ENCODE measurements at regions of chr2 and their contacts with region 1.

Region 1: DNA sequence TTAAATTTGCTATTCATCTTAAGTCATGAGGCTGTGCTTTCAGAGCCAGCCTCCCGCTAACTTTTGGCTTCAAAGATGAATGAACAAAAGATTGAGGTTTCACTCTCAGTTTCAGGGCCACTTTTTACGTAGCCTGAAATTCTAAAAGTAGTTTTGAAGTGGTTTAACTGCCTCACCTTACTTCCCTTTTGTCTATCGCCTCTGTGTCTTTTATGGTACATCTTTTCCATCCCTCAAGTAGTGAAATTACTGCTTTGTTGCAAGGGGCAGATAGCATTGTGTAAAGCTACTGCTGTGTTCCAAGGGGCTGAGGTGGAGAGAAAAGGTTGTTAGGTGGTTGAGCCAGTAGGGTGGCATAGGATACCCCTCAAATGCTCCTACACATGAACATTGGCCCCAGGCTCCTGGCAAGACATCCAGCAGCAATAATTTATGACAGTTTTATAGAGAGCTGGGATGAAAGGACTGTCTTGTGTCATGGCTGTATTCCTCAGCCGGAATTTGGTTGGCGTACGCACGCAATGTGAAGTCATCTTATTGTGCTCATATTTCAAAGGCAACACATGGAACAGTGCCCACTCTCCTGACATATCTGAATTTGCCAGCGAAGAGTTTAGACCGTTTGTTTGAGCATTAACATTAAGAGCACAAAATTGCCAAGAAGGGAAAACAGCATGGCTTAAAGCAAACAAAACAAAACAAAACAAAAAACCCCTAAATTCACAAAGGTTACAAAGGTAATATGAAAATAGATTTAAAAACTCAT is 32.2 kb downstream of the QPCT start:
- DNase-seq: peak; percentile 67
- H3K4me3 Mint-ChIP-seq: no peak overlapping the region
- H3K27ac Mint-ChIP-seq: no peak overlapping the region
- H3K4me1 Mint-ChIP-seq: peaks cover 34% of the 10 kb centered on the region
- H3K27me3 Mint-ChIP-seq: peaks cover 45% of the 10 kb centered on the region

Region 2: GRCh38 chr2:36966370-36967235 is 410.0 kb before region 1 on chr2 and contains the start of gene STRN:
- CTCF ChIA-PET with region 1: no interaction called
- intact Hi-C with region 1: loop called (anchors 1 kb)
- DNase-seq: peak; percentile 96
- H3K4me3 Mint-ChIP-seq: peak within 1 kb of the TSS; percentile 94
- H3K27ac Mint-ChIP-seq: peak within 1 kb of the TSS; percentile 90
- H3K4me1 Mint-ChIP-seq: peaks cover 33% of the 10 kb centered on the region
- H3K27me3 Mint-ChIP-seq: no peaks in the 10 kb centered on the region
- total RNA-seq, gene STRN: 19.3 to 22.2 TPM

Region 3: DNA sequence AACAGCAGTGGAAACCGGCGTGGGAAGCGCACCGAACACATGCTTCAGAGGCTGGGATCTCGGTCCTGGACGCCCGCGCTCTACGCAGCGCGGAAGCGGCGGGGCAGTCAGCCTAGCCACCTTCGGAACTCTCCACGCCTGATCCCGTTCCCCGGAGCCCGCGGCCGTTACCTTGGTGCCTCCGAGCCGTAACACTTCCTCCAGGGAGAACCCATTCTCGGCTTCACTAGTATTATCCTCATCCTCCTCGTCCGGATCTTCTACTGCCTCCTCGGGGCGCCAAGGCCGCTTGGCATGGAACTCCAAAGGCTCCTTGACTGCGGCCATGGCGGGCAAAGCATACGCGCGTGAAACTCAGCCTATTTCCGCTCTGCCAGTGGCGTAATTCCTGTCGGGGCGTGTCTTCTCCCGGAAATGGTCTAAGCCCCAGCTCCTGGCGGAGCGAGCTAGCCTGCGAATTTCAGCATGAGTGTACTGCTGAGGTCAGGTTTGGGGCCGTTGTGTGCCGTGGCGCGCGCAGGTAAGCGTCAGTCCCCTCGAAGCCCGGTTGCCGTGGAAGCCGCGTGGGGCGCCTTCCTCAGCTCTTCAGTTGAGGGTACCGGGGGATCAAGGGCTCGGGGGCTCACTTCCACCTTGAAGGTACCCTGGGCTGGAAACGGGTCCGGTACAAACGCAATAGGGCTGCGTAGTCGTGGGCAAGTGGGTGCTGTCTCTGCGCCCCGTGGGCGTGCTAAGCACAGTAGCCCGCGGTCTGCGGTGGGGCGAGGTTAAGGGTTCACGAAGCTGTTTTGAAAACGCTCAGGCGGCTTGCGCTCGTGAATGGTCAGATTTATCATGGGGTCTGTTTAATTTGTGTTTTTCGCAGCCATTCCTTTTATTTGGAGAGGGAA is 145.1 kb before region 1 on chr2 and contains the starts of genes CEBPZ and NDUFAF7:
- CTCF ChIA-PET with region 1: no interaction called
- intact Hi-C with region 1: loop called (anchors 2 kb)
- DNase-seq: peak; percentile 96
- H3K4me3 Mint-ChIP-seq: no peak within 1 kb of the TSS
- H3K27ac Mint-ChIP-seq: no peak within 1 kb of the TSS
- H3K4me1 Mint-ChIP-seq: peaks cover 40% of the 10 kb centered on the region
- H3K27me3 Mint-ChIP-seq: no peaks in the 10 kb centered on the region
- total RNA-seq, gene CEBPZ: 61.4 to 65.0 TPM
- total RNA-seq, gene NDUFAF7: 17.5 to 18.2 TPM

Region 4: GRCh38 chr2:37344453-37345361 is 31.9 kb before region 1 on chr2 and contains the start of gene QPCT:
- CTCF ChIA-PET with region 1: no interaction called
- intact Hi-C with region 1: loop called (anchors 1 kb)
- DNase-seq: peak; percentile 60
- H3K4me3 Mint-ChIP-seq: peak within 1 kb of the TSS; percentile 72
- H3K27ac Mint-ChIP-seq: no peak within 1 kb of the TSS
- H3K4me1 Mint-ChIP-seq: peaks cover 9% of the 10 kb centered on the region
- H3K27me3 Mint-ChIP-seq: peaks cover 32% of the 10 kb centered on the region
- total RNA-seq, gene QPCT: 0.42 TPM in 1 of 2 experiments, not detected in the other

Region 5: GRCh38 chr2:37623971-37624900 is 247.6 kb after region 1 on chr2:
- CTCF ChIA-PET with region 1: no interaction called
- intact Hi-C with region 1: loop called (anchors 2 kb)
- DNase-seq: peak; percentile 43
- H3K4me3 Mint-ChIP-seq: no peak overlapping the region
- H3K27ac Mint-ChIP-seq: peak overlapping the region; percentile 38
- H3K4me1 Mint-ChIP-seq: peaks cover 67% of the 10 kb centered on the region
- H3K27me3 Mint-ChIP-seq: no peaks in the 10 kb centered on the region

Region 6: DNA sequence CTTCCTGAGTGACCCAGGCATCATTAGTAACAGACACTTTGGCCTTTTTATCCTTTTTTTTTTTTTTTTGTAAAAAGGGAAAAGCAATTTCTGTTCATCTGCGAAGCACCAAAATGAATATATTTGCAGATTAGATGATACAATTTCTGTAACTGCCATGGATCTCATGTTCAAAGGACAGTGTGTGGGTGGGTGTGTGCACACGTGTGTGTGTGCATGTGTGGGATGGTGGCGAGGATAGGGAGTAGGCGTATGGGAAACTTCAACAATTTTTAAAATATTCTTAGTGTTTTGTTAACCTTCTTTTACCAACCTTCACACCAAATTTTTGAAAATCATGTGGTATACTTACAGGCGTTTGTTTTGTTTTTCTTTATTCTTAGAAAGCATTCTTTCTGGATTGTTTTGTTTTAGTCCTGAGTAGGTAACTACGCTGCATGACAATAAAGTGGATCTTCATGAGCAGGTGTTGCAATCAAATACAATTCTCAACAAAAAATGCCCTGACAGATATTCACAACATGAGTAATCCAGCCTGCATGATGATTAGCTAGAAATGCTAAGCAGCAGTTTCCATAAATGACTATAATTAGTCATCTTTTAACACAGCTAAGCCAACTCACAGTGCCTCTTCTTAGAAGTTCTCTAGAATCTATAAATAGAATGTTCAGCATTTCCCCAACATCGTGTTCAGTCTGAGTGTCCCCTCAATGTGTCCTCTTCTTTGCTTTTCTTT is 495.0 kb after region 1 on chr2:
- CTCF ChIA-PET with region 1: interaction called, 3 read pairs
- intact Hi-C with region 1: loop called (anchors 1 kb)
- DNase-seq: no peak
- H3K4me3 Mint-ChIP-seq: peak overlapping the region; percentile 25
- H3K27ac Mint-ChIP-seq: peak overlapping the region; percentile 86
- H3K4me1 Mint-ChIP-seq: peaks cover 30% of the 10 kb centered on the region
- H3K27me3 Mint-ChIP-seq: peaks cover 12% of the 10 kb centered on the region